Activated CD8-positive, alpha-beta memory T cell treated with anti-CD3 and anti-CD28 coated beads, Interleukin-2, amount 10 ng/mL, durations not matched to agents 7 days and 5 days (primary cell): ENCODE measurements at regions of chr3 and their contacts with region 1.

Region 1: GRCh38 chr3:170848292-170848917 is 21.6 kb downstream of the RPL22L1 start:
- DNase-seq: no peak
- ATAC-seq: no peak
- H3K4me3 Mint-ChIP-seq: no peak overlapping the region
- H3K27ac Mint-ChIP-seq: no peak overlapping the region
- H3K4me1 Mint-ChIP-seq: no peaks in the 10 kb centered on the region
- H3K27me3 Mint-ChIP-seq: peaks cover 20% of the 10 kb centered on the region

Region 2: DNA sequence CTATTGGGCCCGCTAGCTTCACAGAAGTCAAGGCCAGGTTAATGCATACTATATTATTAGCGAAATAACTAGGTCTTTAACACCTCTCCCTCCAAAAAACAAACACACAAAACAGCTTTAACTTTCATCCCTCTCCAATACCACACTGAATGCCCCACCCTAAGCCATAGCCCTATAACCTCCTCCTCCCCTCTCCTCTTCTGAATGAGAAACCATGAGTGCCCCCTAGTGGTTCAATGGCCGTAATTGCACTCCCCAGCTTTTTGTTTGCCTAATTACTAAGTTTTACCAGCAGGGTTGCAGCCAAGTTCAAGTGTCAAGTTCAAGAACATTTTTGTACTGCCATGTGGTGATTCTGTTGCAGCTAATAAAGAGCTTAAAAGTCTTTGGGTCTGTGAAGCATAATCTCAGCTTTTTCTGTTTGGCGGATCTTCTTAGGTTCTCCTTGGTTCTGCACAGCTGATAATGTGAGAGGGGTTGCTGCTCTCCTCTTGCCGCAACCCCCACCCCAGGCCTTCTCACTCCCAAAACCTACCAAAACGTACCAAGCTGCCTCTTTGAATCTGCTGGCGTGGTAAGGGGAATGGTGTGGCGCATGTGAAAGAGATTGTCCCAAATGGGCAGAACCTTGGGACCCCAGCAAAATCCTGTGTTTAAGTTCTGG is 36.3 kb before region 1 on chr3:
- CTCF ChIA-PET with region 1: interaction called, 14 read pairs
- DNase-seq: peak; percentile 77
- ATAC-seq: peak; percentile 72
- H3K4me3 Mint-ChIP-seq: no peak overlapping the region
- H3K27ac Mint-ChIP-seq: no peak overlapping the region
- H3K4me1 Mint-ChIP-seq: no peaks in the 10 kb centered on the region
- H3K27me3 Mint-ChIP-seq: peaks cover 5% of the 10 kb centered on the region